ENCODE measurements at regions of chr16 and their contacts with region 1.

Region 1: DNA sequence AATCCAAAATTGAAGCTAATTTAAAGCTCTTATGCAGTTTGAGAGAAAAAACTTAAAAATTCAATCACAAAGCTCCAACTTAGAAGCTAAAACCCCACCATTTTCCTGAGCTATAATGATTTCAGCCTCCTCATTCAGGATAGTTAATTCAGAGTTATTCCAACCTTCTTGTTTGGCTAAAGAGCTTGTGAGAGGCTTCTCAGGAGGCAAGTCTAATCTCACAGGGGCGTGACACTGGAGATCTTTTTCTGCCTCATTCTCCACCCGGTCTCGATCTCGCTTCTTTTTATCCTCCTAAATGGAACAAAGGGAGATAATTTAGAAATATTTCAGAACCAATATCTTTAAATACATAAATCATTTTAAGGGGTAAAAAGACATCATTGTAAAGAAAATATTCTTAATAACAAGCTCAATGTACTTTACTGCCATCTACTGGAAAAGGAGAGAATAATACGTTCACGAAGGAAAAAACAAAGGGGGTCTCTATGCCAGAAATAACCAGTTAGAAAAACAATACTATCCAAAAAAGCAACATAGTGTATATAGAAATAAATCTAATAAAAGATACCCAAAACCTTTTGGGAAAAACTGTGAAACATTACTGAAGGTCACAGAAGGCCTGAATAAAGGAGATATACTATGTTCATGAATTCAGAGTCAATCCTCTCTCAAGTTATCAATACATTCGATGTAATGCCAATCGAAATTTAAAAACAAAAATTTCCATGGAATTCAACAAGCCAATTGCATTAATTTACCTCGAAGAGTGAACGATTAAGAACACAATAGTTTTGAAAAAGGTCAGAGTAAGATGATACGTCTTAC is 13.9 kb downstream of the BRD7 start:
- DNase-seq: no peak
- H3K4me3 ChIP-seq: no peak overlapping the region
- H3K27ac ChIP-seq: no peak overlapping the region
- H3K4me1 ChIP-seq: peaks cover 0 to 3% of the 10 kb centered on the region in 2 donors
- H3K27me3 ChIP-seq: no peaks in the 10 kb centered on the region
- CTCF ChIP-seq: peak; percentile 22 to 70 (median 50)
- POLR2A ChIP-seq: no peak

Region 2: GRCh38 chr16:50024684-50025536 is 329.9 kb before region 1 on chr16 and contains the start of gene CNEP1R1:
- intact Hi-C with region 1: loop called in 1 of 2 experiments (anchors 10 kb)
- DNase-seq: peak; percentile 93 to 98 (median 96)
- H3K4me3 ChIP-seq: peak within 1 kb of the TSS; percentile 31 to 84 (median 75)
- H3K27ac ChIP-seq: peak within 1 kb of the TSS; percentile 15 to 82 (median 77)
- H3K4me1 ChIP-seq: peaks cover 3 to 18% of the 10 kb centered on the region in 2 donors
- H3K27me3 ChIP-seq: no peaks in the 10 kb centered on the region
- CTCF ChIP-seq: peak; percentile 100
- POLR2A ChIP-seq: peak in 1 of 2 donors; percentile 41
- total RNA-seq, gene CNEP1R1: 14.7 to 25.3 (median 20.5) TPM

Region 3: GRCh38 chr16:50245417-50246298 is 109.2 kb before region 1 on chr16:
- intact Hi-C with region 1: loop called in 1 of 2 experiments (anchors 10 kb)
- DNase-seq: peak in 5 of 7 donors; percentile 34 to 62 (median 40)
- H3K4me3 ChIP-seq: peak overlapping the region in 2 of 4 donors; percentile 35 to 68
- H3K27ac ChIP-seq: no peak overlapping the region
- H3K4me1 ChIP-seq: peaks cover 14 to 20% of the 10 kb centered on the region in 2 donors
- H3K27me3 ChIP-seq: no peaks in the 10 kb centered on the region
- CTCF ChIP-seq: peak in 2 of 6 experiments; percentile 31 to 34
- POLR2A ChIP-seq: no peak

Measured in adrenal gland (tissue), 19 donors.